ENCODE measurements at regions of chr10 and their contacts with region 1.

Region 1: GRCh38 chr10:72846225-72846624 is 47.3 kb upstream of the OIT3 start:
- DNase-seq: no peak
- ATAC-seq: no peak

Region 2: DNA sequence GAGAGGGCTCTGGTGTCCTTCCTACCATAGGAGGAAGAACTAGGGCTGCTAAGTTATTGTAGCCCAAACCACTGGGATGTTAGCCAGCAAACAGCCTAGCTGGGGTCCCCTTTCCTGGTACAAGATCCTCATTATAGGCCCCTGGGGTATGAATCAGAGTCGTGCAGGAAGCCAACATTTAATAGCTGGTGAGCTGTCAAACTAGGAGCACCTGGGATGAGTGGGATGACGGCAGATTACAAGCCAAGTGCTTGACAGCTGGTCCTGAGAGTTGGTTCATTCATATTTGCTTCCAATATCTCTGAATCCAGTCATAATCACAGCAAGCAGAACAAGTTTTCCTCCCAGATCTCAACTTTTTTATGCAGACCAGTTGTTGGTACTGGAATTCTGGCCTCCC is 466.4 kb before region 1 on chr10:
- intact Hi-C with region 1: loop called (anchors 10 kb)
- DNase-seq: no peak
- ATAC-seq: no peak

Region 3: DNA sequence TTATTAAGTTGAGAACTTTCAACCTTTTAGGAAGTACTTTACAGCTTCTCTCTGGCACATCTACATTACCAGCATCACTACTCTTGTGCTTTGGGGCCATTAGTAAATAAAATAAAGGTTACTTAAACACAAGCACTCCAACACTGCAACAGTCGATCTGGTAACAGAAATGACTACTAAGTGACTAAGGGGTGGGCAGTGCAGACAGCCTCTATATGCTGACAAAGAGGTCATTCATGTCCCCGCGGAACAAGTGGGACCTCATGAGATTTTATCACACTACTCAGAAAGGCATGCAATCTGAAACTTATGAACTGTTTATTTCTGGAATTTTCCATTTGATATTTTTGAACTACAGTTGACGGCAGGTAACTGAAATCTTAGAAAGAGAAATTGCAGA is 380.2 kb before region 1 on chr10:
- intact Hi-C with region 1: no loop called
- DNase-seq: no peak
- ATAC-seq: no peak